WTC11 (cell line): ENCODE measurements at regions of chr4 and their contacts with region 1.

Region 1: DNA sequence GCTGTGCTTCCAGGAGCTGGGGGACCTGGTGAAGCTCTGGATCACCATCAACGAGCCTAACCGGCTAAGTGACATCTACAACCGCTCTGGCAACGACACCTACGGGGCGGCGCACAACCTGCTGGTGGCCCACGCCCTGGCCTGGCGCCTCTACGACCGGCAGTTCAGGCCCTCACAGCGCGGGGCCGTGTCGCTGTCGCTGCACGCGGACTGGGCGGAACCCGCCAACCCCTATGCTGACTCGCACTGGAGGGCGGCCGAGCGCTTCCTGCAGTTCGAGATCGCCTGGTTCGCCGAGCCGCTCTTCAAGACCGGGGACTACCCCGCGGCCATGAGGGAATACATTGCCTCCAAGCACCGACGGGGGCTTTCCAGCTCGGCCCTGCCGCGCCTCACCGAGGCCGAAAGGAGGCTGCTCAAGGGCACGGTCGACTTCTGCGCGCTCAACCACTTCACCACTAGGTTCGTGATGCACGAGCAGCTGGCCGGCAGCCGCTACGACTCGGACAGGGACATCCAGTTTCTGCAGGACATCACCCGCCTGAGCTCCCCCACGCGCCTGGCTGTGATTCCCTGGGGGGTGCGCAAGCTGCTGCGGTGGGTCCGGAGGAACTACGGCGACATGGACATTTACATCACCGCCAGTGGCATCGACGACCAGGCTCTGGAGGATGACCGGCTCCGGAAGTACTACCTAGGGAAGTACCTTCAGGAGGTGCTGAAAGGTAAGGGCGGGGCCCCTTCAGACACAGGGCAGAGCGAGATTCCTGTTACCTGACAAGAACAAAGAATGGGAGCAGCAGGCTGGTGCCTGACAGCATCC is 11.8 kb downstream of the RPL9 start:
- DNase-seq: peak; percentile 80
- ATAC-seq: peak; percentile 77
- H3K4me3 Mint-ChIP-seq: peak overlapping the region; percentile 75
- H3K27ac Mint-ChIP-seq: peak overlapping the region; percentile 53
- H3K4me1 Mint-ChIP-seq: peaks cover 27% of the 10 kb centered on the region
- H3K27me3 Mint-ChIP-seq: 0 out of 2 replicates have a peak, but pooled peaks cover 2% of the 10 kb centered on the region
- CTCF ChIP-seq: no peak

Region 2: DNA sequence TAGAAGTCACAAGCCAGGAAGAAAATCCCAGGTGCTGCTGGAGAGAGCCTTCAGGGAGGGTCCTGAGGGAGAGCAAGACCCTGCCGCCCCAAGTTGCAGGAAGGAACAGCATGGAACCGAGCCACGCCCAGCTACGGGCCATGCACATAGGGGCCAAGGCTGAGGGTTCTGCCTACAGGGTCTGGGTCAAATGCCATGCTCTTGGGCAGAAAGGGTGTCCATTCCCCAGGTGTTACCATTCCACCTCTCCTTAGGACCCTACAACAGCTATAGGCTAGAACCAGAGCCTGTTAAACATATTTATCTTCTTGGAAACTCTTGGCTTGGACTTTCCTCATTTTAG is 10.8 kb before region 1 on chr4:
- CTCF ChIA-PET with region 1: interaction called, 11 read pairs
- POLR2A ChIA-PET with region 1: no interaction called
- DNase-seq: no peak
- ATAC-seq: peak; percentile 72
- H3K4me3 Mint-ChIP-seq: no peak overlapping the region
- H3K27ac Mint-ChIP-seq: no peak overlapping the region
- H3K4me1 Mint-ChIP-seq: no peaks in the 10 kb centered on the region
- H3K27me3 Mint-ChIP-seq: peaks cover 3% of the 10 kb centered on the region
- CTCF ChIP-seq: no peak

Region 3: DNA sequence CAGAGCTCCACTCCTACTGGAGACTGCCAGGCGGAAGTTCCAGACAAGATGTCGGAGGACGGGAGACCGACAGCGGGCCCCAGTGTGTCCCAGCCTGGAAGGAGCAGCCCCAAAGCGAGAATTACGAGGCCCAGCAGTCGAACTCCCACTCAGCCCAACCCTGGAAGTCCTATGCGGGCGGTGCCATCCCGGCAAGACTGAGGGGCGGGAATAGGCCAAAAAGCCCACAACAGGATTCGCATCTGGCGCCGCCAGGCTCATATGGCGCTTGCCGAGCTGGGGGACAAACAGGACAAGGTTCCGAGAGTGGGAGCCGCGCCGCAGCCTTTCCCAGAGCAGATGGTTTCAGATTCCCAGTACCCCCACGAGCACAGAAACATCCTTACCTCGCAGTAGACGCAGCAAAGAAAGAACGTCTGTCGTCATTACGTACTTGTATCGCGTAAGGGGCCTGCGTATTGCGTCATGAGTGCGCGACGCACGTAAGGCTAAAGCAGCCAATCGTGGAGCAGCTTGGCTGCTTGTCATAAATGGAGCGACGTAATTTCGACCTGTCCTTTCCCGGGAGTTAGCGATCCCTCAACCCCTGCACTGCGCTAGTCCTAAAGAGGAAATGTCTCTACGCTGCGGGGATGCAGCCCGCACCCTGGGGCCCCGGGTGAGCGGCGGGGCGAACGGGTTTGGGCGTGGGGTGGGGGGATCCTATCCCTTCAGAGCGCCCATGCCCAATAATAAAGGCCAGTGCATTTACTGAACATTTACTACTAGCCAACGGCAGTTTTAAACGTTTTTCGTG is 11.7 kb after region 1 on chr4 and contains the starts of genes LIAS and RPL9:
- CTCF ChIA-PET with region 1: no interaction called
- POLR2A ChIA-PET with region 1: interaction called, 10 read pairs
- DNase-seq: peak; percentile 94
- ATAC-seq: peak; percentile 94
- H3K4me3 Mint-ChIP-seq: peak within 1 kb of the TSS; percentile 99
- H3K27ac Mint-ChIP-seq: peak within 1 kb of the TSS; percentile 99
- H3K4me1 Mint-ChIP-seq: peaks cover 25% of the 10 kb centered on the region
- H3K27me3 Mint-ChIP-seq: no peaks in the 10 kb centered on the region; the same call in 1 of the 2 replicates
- CTCF ChIP-seq: no peak
- total RNA-seq, gene LIAS: 23.1 to 23.5 TPM (median 23.1 TPM) in 3 replicates
- total RNA-seq, gene RPL9: 1,191 to 1,343 TPM (median 1,328 TPM) in 3 replicates